ENCODE measurements at regions of chr18 and their contacts with region 1.

Region 1: GRCh38 chr18:55589625-55590291 is 1.8 kb upstream of the TCF4 start:
- DNase-seq: peak; percentile 85 to 95 (median 86)
- ATAC-seq: peak; percentile 76
- H3K4me3 ChIP-seq: peak overlapping the region; percentile 63
- H3K27ac ChIP-seq: peak overlapping the region; percentile 89
- H3K4me1 ChIP-seq: peaks cover 6 to 34% of the 10 kb centered on the region in 2 experiments
- H3K27me3 ChIP-seq: no peaks in the 10 kb centered on the region
- CTCF ChIP-seq: no peak
- EP300 ChIP-seq: peak; percentile 24; the same call in 1 of the 2 replicates
- POLR2A ChIP-seq: peak; percentile 84
- RAD21 ChIP-seq: no peak

Region 2: GRCh38 chr18:55038162-55038561 is 551.6 kb before region 1 on chr18:
- CTCF ChIA-PET with region 1: no interaction called
- POLR2A ChIA-PET with region 1: no interaction called
- in situ Hi-C with region 1: no loop called
- intact Hi-C with region 1: no loop called
- DNase-seq: no peak
- ATAC-seq: no peak
- H3K4me3 ChIP-seq: no peak overlapping the region
- H3K27ac ChIP-seq: no peak overlapping the region
- H3K4me1 ChIP-seq: no peaks in the 10 kb centered on the region
- H3K27me3 ChIP-seq: no peaks in the 10 kb centered on the region; a peak in 1 of 5 replicates
- CTCF ChIP-seq: no peak
- EP300 ChIP-seq: no peak
- POLR2A ChIP-seq: no peak
- RAD21 ChIP-seq: no peak

Region 3: DNA sequence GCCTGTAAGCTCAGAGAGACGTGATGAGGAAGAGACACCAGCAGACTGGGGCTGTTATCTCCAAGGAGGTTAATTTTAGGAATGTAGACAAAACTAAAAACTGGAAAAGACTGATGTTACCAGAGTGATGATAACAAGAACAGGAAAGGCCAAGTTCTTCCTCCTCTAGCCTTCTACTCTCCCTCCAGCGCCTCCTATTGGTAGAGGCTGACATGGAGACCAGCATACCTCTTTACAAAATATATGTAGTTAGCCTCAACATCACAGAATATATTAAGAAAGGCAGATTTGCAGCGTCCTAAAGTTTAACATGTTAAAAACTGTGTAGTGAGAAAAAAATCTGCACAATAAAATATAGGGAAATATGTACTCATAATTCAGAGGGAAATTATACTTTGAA is 67.7 kb before region 1 on chr18:
- CTCF ChIA-PET with region 1: no interaction called
- POLR2A ChIA-PET with region 1: no interaction called
- in situ Hi-C with region 1: no loop called
- intact Hi-C with region 1: loop called (anchors 5 kb)
- DNase-seq: peak; percentile 23 to 71 (median 34)
- ATAC-seq: peak; percentile 77
- H3K4me3 ChIP-seq: no peak overlapping the region
- H3K27ac ChIP-seq: no peak overlapping the region
- H3K4me1 ChIP-seq: peaks cover 0 to 7% of the 10 kb centered on the region in 2 experiments; a peak in 3 of 5 replicates
- H3K27me3 ChIP-seq: no peaks in the 10 kb centered on the region
- CTCF ChIP-seq: peak; percentile 57 to 74 (median 61)
- EP300 ChIP-seq: no peak
- POLR2A ChIP-seq: no peak
- RAD21 ChIP-seq: peak; percentile 38 to 58

Region 4: GRCh38 chr18:55731594-55732042 is 141.9 kb after region 1 on chr18:
- CTCF ChIA-PET with region 1: no interaction called
- POLR2A ChIA-PET with region 1: no interaction called
- in situ Hi-C with region 1: no loop called
- intact Hi-C with region 1: loop called (anchors 5 kb)
- DNase-seq: peak; percentile 42 to 64 (median 56)
- ATAC-seq: peak; percentile 80
- H3K4me3 ChIP-seq: no peak overlapping the region; the same call in 1 of the 2 replicates
- H3K27ac ChIP-seq: peak overlapping the region; percentile 77
- H3K4me1 ChIP-seq: peaks cover 0 to 34% of the 10 kb centered on the region in 2 experiments; a peak in 2 of 5 replicates
- H3K27me3 ChIP-seq: no peaks in the 10 kb centered on the region
- CTCF ChIP-seq: no peak
- EP300 ChIP-seq: peak; percentile 21; the same call in 1 of the 2 replicates
- POLR2A ChIP-seq: no peak
- RAD21 ChIP-seq: no peak

Region 5: GRCh38 chr18:55781481-55781957 is 191.8 kb after region 1 on chr18:
- CTCF ChIA-PET with region 1: no interaction called
- POLR2A ChIA-PET with region 1: no interaction called
- in situ Hi-C with region 1: no loop called
- intact Hi-C with region 1: loop called (anchors 2 kb)
- DNase-seq: peak in 3 of 4 experiments; percentile 11 to 54 (median 42)
- ATAC-seq: peak; percentile 75; the same call in 2 of the 3 replicates
- H3K4me3 ChIP-seq: no peak overlapping the region
- H3K27ac ChIP-seq: no peak overlapping the region
- H3K4me1 ChIP-seq: peaks cover 3 to 10% of the 10 kb centered on the region in 2 experiments; a peak in 4 of 5 replicates
- H3K27me3 ChIP-seq: no peaks in the 10 kb centered on the region
- CTCF ChIP-seq: peak; percentile 49 to 66 (median 64); a peak in 5 of 6 replicates
- EP300 ChIP-seq: no peak
- POLR2A ChIP-seq: no peak
- RAD21 ChIP-seq: peak; percentile 80 to 83